ENCODE measurements at regions of chr1 and their contacts with region 1.

Region 1: GRCh38 chr1:32933742-32934322 is 30.8 kb downstream of the RNF19B start:
- DNase-seq: no peak
- ATAC-seq: no peak
- H3K4me3 Mint-ChIP-seq: no peak overlapping the region
- H3K27ac Mint-ChIP-seq: no peak overlapping the region
- H3K4me1 Mint-ChIP-seq: peaks cover 14% of the 10 kb centered on the region
- H3K27me3 Mint-ChIP-seq: no peaks in the 10 kb centered on the region

Region 2: DNA sequence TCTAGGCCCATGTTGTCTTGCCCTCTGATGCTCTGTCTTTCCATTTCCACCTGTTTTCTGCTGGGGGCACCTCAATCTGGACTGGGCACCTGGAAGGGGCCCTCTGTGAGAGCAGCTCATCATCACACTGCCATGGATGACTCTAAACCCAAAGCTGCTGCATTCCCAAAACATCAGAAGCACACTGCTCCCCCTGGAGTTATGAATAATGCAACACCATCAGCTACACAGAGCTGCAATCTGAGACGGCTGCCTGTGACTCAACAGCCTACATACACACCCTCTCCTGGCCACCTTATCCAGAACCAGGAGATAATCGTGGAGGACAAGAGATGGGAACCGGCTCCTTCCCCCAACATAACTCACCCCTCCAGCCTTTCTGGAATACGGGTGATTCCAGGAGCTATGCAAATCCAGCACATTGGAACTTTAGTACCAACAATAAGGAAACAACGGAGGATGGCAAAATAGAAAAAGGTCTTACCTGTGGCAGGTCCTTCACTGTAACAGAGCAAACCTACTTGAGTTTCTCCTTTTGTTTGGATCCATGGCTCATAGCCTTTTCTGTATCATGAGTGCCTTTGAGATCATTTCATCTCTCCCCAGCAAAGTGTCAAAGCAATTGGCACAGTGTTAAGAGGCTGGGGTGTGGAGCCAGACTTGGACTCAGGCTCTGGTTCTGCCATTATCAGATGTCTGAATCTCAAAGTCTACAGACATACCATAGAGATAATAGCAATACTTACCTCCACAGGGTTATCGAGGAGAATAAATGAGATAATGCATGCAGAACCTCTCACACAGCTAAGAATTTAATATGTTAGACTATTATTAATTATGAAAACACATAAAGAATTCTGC is 73.6 kb after region 1 on chr1:
- CTCF ChIA-PET with region 1: interaction called, 53 read pairs
- POLR2A ChIA-PET with region 1: no interaction called
- DNase-seq: no peak
- ATAC-seq: no peak
- H3K4me3 Mint-ChIP-seq: no peak overlapping the region
- H3K27ac Mint-ChIP-seq: no peak overlapping the region
- H3K4me1 Mint-ChIP-seq: no peaks in the 10 kb centered on the region
- H3K27me3 Mint-ChIP-seq: no peaks in the 10 kb centered on the region

Region 3: GRCh38 chr1:33055210-33056008 is 121.6 kb after region 1 on chr1:
- CTCF ChIA-PET with region 1: interaction called, 101 read pairs
- POLR2A ChIA-PET with region 1: no interaction called
- DNase-seq: peak; percentile 50
- ATAC-seq: peak; percentile 65
- H3K4me3 Mint-ChIP-seq: no peak overlapping the region
- H3K27ac Mint-ChIP-seq: no peak overlapping the region
- H3K4me1 Mint-ChIP-seq: peaks cover 12% of the 10 kb centered on the region
- H3K27me3 Mint-ChIP-seq: peaks cover 3% of the 10 kb centered on the region

Region 4: GRCh38 chr1:33086384-33086850 is 152.6 kb after region 1 on chr1:
- CTCF ChIA-PET with region 1: interaction called, 25 read pairs
- POLR2A ChIA-PET with region 1: no interaction called
- DNase-seq: peak; percentile 55
- ATAC-seq: no peak
- H3K4me3 Mint-ChIP-seq: no peak overlapping the region
- H3K27ac Mint-ChIP-seq: no peak overlapping the region
- H3K4me1 Mint-ChIP-seq: peaks cover 66% of the 10 kb centered on the region
- H3K27me3 Mint-ChIP-seq: peaks cover 7% of the 10 kb centered on the region